Activated naive CD4-positive, alpha-beta T cell treated with anti-CD3 and anti-CD28 coated beads, Interleukin-2, amount 10 ng/mL, durations not matched to agents 7 days and 5 days (primary cell): ENCODE measurements at regions of chr17 and their contacts with region 1.

Region 1: DNA sequence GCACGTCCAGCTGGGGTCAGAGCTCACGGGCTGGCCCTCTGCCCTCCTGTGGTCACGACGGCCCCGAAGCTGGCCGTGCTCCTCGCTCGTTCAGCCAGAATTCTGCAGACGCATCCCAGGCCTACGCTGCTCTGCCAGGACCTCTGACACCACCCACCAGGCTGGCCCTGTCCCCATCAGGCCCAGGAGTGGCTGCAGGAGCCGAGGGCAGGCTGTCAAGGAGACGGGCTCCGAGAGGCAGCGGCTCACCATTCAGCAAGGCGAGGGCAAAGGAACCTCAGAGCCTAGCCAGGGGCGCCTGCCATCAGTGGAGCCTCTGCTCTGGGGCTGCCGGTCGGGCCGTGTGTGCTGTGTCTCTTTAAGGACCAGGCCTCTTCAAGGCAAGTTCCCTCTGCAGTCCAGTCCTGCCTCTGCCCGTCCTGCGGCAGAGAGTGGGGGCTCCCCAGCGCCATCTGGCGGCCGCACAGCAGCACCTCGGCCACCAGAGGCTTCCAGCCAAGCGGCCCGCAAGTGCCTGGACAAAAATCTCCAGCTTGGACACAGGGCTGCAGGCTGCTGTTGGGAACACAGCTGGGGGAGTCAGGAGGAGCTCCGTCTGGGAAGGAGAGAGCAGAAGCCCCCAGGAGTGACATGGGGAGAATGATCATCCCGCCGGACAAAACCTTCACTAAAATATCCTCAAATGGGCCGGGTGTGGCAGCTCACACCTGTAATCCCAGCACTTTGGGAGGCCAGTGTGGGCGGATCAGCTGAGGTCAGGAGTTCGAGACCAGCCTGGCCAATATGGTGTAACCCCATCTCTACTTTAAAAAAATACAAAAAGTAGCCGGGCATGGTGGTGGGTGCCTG is 7.4 kb upstream of the ABR start:
- DNase-seq: peak; percentile 80
- H3K4me3 Mint-ChIP-seq: no peak overlapping the region
- H3K27ac Mint-ChIP-seq: no peak overlapping the region
- H3K4me1 Mint-ChIP-seq: peaks cover 7% of the 10 kb centered on the region
- H3K27me3 Mint-ChIP-seq: peaks cover 82% of the 10 kb centered on the region

Region 2: DNA sequence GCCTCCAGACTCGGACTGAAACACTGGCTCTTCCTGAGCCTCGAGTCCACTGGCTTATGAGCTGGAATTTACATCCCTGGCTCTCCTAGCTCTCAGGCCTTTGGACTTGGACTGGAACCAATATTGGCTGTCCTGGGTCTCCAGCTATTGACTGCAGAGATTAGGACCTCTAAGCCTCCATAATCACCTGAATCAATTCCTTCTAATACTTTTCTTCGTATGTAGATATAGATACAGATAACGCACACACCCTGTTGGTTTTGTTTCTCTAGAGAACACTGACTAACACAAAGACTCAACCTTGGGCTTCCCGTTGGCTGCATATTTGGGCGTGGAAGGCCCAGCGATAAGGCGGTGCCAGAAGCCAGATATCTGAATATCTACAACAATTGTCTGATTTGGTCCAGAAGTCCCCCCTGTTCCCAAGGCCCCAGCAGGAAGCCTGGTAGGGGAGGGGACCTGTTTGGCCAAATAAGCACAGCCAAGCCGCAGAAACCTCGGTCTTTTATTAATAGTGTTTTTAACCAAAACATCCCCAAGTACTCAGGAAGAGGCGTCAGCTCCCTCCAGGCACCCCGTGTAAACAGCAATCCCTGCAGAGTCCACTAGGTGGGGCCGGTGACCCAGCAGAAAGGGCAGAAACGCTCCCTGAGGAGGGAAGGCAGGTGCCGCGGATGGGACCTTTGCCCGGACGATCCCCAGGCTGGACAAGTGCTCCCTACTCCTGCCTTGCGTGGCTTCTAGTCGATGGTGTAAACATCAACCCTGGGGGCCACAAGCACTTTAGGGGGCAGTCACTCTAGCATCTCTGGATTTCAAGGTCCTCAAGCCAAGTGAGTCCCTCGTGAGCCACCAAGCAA is 64.4 kb before region 1 on chr17:
- CTCF ChIA-PET with region 1: interaction called, 97 read pairs
- DNase-seq: peak; percentile 88
- H3K4me3 Mint-ChIP-seq: no peak overlapping the region
- H3K27ac Mint-ChIP-seq: no peak overlapping the region
- H3K4me1 Mint-ChIP-seq: peaks cover 10% of the 10 kb centered on the region
- H3K27me3 Mint-ChIP-seq: peaks cover 41% of the 10 kb centered on the region

Region 3: DNA sequence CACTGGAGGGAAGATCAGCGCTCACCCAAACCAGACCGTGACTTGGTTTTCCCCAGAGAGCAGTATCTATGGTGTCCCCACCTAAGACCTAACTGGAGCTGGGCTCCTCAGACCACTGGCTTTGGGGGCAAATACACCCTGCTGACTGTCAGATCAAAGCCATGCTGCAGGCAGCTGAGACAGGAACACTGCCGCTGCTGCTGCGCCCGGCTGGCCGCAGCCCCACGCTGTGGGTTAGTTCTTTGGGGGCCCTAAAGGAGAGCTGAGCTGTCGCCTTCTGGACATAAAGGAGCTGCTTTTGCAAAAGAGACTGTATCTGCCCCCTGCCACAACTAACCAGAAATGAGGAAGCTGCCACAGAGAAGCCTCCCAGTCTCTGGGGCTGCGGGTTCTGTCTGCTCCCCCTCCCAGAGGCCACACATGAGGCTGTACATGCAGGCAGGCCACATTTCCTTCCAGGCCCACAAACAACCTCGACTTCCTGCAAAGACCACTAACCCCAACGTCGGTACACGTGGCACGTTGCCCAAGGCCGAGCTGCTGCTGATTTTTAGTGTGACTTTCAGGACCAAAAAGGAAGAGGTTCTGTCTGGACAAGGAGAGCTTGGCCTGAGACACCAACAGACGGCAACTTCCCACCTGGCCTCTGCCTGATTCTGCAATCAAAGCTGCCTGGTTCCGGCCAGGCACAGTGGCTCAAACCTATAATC is 10.8 kb after region 1 on chr17:
- CTCF ChIA-PET with region 1: interaction called, 17 read pairs
- DNase-seq: peak; percentile 80
- H3K4me3 Mint-ChIP-seq: peak overlapping the region; percentile 35
- H3K27ac Mint-ChIP-seq: peak overlapping the region; percentile 87
- H3K4me1 Mint-ChIP-seq: peaks cover 61% of the 10 kb centered on the region
- H3K27me3 Mint-ChIP-seq: peaks cover 18% of the 10 kb centered on the region